ENCODE measurements at regions of chr20 and their contacts with region 1.

Region 1: DNA sequence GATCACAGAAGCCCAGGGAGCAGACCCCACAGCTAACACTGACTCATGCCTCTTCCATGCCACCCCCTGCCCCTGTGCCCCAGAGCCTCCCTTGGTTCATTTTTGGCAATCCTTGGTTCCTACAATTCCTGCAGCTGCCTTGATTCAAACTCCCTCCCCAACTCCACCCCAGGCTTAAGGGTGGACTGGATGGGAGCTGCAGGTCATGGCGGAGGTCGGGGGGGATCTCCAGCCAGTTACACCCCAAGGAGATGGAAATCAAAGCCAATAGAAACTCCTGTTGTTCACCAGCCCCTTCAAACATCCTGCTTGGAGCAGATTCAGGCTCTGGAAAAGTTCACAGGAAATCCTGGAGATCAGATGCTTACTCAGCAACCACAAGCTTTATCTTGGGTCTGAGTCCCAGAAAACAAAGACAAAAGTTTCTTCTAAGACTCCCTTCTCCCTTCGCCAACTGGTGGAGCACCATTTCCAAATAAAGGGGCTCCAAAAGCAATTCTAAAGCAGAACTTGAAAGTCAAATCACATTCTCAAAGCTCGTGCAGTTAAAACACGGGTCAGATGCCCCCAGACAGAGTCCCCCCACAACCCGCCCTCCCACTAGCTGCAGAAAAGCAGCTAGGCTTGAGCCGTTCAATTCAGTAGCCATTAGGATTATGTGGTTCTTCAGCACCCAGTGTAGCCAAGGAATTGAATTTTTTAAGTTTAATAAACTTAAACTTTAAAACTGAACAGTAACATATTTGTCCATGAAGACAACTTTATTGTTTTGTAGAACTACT is 149.5 kb downstream of the ANKRD60 start:
- DNase-seq: peak; percentile 71
- H3K4me3 ChIP-seq: no peak overlapping the region
- H3K27ac ChIP-seq: peak overlapping the region; percentile 22
- H3K4me1 ChIP-seq: peaks cover 45% of the 10 kb centered on the region
- H3K27me3 ChIP-seq: no peaks in the 10 kb centered on the region
- CTCF ChIP-seq: no peak
- POLR2A ChIP-seq: no peak

Region 2: DNA sequence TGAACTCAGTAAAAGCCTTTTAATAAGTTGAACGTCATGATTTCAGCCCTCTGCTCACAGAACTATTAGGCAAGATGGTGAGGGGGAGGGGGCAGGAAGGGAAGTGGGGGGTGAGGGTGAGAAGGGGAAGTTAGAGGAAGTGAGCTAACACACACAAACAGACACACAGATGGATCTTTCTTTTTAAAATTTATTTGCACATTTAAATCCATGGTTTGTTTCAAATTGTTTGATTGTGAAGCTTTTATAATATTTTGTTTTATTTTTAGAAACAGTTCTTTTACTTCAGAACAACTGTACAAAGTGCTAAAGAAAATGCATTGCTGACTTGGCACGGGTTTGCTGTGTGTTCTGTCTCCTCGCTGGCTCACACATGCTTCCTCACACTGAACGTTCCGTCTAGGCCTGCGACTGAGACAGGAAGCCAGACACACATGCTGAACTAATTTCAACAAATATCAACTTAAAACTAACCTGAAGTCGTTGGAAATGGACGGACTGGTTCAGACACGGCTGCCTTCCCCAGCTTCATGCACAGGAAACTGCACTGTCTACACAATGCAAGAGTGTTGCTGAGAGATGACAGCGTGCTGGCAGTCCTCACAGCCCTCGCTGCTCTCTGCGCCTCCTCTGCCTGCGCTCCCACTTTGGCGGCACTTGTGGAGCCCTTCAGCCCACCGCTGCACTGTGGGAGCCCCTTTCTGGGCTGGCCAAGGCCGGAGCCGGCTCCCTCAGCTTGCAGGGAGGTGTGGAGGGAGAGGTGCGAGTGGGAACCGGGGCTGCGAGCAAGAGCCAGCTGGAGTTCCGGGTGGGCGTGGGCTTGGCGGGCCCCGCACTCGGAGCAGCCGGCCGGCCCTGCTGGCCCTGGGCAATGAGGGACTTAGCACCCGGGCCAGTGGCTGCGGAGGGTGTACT is 450.6 kb before region 1 on chr20:
- CTCF ChIA-PET with region 1: interaction called, 7 read pairs
- POLR2A ChIA-PET with region 1: no interaction called
- dilution Hi-C with region 1: loop called (anchors 25 kb)
- intact Hi-C with region 1: loop called (anchors 1 kb)
- DNase-seq: peak; percentile 86
- H3K4me3 ChIP-seq: no peak overlapping the region
- H3K27ac ChIP-seq: peak overlapping the region; percentile 61
- H3K4me1 ChIP-seq: peaks cover 8% of the 10 kb centered on the region
- H3K27me3 ChIP-seq: peaks cover 6% of the 10 kb centered on the region in 2 experiments
- CTCF ChIP-seq: no peak
- POLR2A ChIP-seq: no peak

Region 3: GRCh38 chr20:57709931-57710799 is 368.8 kb before region 1 on chr20 and contains the start of gene PMEPA1:
- CTCF ChIA-PET with region 1: interaction called, 5 read pairs
- POLR2A ChIA-PET with region 1: no interaction called
- dilution Hi-C with region 1: no loop called
- intact Hi-C with region 1: loop called (anchors 1 kb)
- DNase-seq: peak; percentile 96
- H3K4me3 ChIP-seq: peak within 1 kb of the TSS; percentile 79 to 88 (median 81)
- H3K27ac ChIP-seq: peak within 1 kb of the TSS; percentile 83
- H3K4me1 ChIP-seq: peaks cover 14% of the 10 kb centered on the region
- H3K27me3 ChIP-seq: no peaks in the 10 kb centered on the region
- CTCF ChIP-seq: peak in 1 of 2 donors; percentile 15
- POLR2A ChIP-seq: no peak
- total RNA-seq, gene PMEPA1: 31.6 and 47.1 TPM in 2 replicates

Region 4: GRCh38 chr20:57769756-57770155 is 309.2 kb before region 1 on chr20:
- CTCF ChIA-PET with region 1: no interaction called
- POLR2A ChIA-PET with region 1: no interaction called
- dilution Hi-C with region 1: no loop called
- intact Hi-C with region 1: loop called (anchors 5 kb)
- DNase-seq: peak; percentile 61
- H3K4me3 ChIP-seq: no peak overlapping the region
- H3K27ac ChIP-seq: peak overlapping the region; percentile 62
- H3K4me1 ChIP-seq: peaks cover 44% of the 10 kb centered on the region
- H3K27me3 ChIP-seq: no peaks in the 10 kb centered on the region
- CTCF ChIP-seq: no peak
- POLR2A ChIP-seq: no peak

Region 5: GRCh38 chr20:57921676-57922075 is 157.3 kb before region 1 on chr20:
- CTCF ChIA-PET with region 1: no interaction called
- POLR2A ChIA-PET with region 1: no interaction called
- dilution Hi-C with region 1: no loop called
- intact Hi-C with region 1: no loop called
- DNase-seq: no peak
- H3K4me3 ChIP-seq: no peak overlapping the region
- H3K27ac ChIP-seq: no peak overlapping the region
- H3K4me1 ChIP-seq: no peaks in the 10 kb centered on the region
- H3K27me3 ChIP-seq: no peaks in the 10 kb centered on the region
- CTCF ChIP-seq: no peak
- POLR2A ChIP-seq: no peak

Region 6: DNA sequence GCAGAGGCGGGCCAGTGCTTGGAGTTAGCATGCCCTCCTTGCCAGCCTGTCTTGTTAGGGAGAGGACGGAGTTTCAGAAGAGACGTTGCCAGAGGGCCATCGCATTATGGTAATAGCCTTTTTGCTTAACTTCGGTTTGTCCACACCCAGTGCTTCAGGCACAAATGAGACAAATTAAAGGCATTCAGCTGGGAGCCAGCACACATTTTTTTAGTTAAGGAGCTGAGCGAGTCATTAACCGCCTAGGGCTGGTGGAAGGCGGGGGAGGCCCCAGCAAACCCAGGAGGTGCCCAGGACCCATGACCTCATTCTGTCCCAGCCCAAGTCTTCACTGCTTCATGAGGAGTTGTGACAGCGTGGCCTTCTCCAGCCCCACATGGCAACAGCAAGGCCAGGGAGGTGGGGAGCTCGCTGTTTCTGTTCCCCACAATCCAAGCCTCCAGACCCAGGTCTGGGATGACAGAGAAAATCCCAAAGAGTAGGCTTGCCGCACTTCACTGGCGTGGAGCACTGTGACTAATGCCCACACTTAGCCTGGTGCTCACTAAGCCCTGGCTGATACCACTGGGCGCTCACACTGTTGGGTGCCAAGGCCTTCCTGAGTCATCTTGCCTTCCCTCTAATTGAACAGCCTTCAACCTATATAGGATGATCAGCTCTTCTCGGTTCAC is 87.6 kb before region 1 on chr20:
- CTCF ChIA-PET with region 1: no interaction called
- POLR2A ChIA-PET with region 1: no interaction called
- dilution Hi-C with region 1: no loop called
- intact Hi-C with region 1: loop called (anchors 5 kb)
- DNase-seq: no peak
- H3K4me3 ChIP-seq: no peak overlapping the region
- H3K27ac ChIP-seq: no peak overlapping the region
- H3K4me1 ChIP-seq: no peaks in the 10 kb centered on the region
- H3K27me3 ChIP-seq: peaks cover 0 to 4% of the 10 kb centered on the region in 2 experiments
- CTCF ChIP-seq: no peak
- POLR2A ChIP-seq: no peak

Measured in endothelial cell of umbilical vein (primary cell).